AG04450 (cell line): ENCODE measurements at regions of chr5 and their contacts with region 1.

Region 1: DNA sequence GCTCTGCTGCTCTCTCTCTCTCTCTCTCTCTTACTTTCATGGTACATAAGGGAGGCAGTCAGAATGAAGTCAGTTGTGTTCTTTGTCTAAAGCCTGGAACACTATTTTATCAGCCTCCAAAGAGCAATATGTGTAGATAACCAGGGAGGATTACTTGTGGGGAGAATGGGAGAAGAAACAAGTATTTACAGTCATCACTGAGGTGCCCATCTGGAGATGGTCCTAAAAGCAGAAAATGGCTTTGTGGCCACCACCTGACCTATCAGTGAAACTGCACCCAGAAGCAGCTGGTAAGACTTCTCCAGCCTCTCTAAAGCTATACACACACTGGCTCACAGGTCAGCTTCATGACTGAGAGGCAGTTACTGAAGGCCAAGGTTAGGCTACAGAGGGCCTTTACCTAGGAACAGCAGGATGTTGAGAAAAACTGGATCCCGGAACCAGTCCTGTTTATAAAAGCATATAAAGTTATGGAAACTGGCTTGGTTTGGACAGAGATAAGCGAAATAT is 75.1 kb downstream of the MRPS27 start:
- DNase-seq: no peak
- H3K4me3 ChIP-seq: no peak overlapping the region
- H3K27ac ChIP-seq: no peak overlapping the region
- H3K27me3 ChIP-seq: no peaks in the 10 kb centered on the region
- CTCF ChIP-seq: peak; percentile 56

Region 2: DNA sequence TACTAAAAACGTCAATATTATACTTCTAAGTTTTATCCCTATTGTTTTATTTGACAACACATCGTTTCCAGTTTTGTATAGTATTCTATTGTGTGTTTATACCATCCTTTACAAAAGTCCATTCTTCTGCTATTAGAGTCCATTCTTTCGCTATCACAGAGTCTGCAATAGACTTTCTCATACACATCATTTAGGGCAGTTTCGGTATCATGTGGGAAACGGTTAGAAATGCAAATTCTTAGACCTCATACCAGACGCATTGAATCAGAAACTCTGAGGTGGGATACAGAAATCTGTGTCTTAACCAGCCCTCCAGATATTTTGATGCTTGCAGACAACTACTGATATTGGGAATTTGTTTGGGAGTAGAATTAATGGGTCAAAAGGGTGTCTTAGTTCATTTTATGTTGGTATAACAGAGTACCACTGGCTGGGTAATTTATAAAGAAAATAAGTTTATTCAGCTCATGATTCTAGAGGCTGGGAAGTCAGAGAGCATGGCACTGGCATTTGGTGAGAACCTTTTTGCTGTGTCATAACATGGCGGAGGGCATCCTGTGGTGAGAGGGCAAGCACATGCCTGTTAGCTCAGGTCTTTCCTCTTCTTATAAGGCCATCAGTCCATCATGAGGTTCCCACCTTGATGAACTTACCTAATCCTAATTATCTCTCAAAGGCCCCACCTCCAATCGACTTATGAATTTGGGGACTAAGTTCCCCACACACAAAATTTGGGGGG is 504.7 kb before region 1 on chr5:
- CTCF ChIA-PET with region 1: no interaction called
- POLR2A ChIA-PET with region 1: no interaction called
- DNase-seq: no peak
- H3K4me3 ChIP-seq: no peak overlapping the region
- H3K27ac ChIP-seq: no peak overlapping the region
- H3K27me3 ChIP-seq: peaks cover 7% of the 10 kb centered on the region
- CTCF ChIP-seq: no peak

Region 3: DNA sequence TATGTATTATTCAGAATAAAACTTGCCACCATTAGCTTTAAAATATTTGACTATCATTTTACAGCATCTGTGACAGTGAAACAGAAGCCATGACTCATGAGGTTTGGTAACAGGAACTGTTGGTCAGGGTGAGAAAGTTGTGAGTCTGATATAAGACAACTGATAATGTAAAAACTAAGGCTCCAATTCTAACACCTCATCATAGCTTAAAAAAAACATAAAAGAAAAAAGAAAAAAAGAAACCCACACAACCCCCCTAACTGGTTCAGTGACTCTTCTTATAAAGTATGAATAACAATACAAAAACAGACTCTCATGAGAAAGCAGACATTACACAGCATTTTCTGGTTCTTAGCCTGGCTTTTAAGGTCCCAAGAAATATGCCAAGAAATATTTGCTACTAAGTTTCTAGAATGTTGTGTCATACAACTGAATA is 10.6 kb before region 1 on chr5:
- CTCF ChIA-PET with region 1: interaction called, 12 read pairs
- POLR2A ChIA-PET with region 1: interaction called, 5 read pairs
- DNase-seq: no peak
- H3K4me3 ChIP-seq: no peak overlapping the region
- H3K27ac ChIP-seq: no peak overlapping the region
- H3K27me3 ChIP-seq: no peaks in the 10 kb centered on the region
- CTCF ChIP-seq: no peak